AG04450 (cell line): ENCODE measurements at regions of chr10 and their contacts with region 1.

Region 1: DNA sequence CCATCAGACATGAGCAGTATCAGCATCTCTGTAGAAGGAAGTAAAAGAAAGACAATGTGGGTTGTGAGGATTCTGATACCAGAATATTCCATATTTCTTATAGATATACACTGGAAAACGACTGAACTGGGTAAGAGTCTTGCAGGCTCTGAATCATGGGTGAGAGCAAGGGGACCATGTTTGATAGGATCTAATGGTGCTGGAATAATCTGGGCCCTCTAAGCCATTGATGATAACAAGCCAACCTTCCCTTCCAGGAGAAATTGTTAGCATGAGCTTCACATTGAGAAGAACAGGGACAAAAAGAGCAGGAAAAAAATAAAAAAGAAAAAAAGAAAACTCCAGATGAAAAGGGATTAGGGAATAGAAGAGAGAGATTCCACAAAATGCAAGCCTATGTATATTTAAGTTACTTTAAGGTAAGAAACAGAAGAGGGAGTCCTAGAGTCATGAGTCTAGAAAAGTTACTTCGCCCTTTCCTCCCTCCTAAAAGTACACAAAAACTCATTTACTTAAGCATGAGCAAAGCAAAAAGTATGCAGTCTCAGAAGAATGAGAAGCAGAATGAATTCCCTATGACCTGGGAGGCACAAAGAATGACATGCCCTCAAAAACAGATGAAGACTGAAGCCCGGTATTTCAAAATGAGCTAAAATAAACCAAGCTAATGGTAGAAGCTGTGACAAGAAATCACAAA is 181.9 kb downstream of the TMEM26 start:
- DNase-seq: peak; percentile 37
- H3K4me3 ChIP-seq: no peak overlapping the region
- H3K27ac ChIP-seq: no peak overlapping the region
- H3K27me3 ChIP-seq: no peaks in the 10 kb centered on the region
- CTCF ChIP-seq: peak; percentile 45

Region 2: GRCh38 chr10:61294131-61294530 is 22.9 kb after region 1 on chr10:
- CTCF ChIA-PET with region 1: no interaction called
- POLR2A ChIA-PET with region 1: no interaction called
- DNase-seq: no peak
- H3K4me3 ChIP-seq: no peak overlapping the region
- H3K27ac ChIP-seq: no peak overlapping the region
- H3K27me3 ChIP-seq: no peaks in the 10 kb centered on the region
- CTCF ChIP-seq: no peak

Region 3: GRCh38 chr10:61733358-61733940 is 462.2 kb after region 1 on chr10:
- CTCF ChIA-PET with region 1: interaction called, 14 read pairs
- POLR2A ChIA-PET with region 1: no interaction called
- DNase-seq: peak; percentile 13
- H3K4me3 ChIP-seq: no peak overlapping the region
- H3K27ac ChIP-seq: no peak overlapping the region
- H3K27me3 ChIP-seq: no peaks in the 10 kb centered on the region
- CTCF ChIP-seq: peak; percentile 72